GM12878 (cell line): ENCODE measurements at regions of chr10 and their contacts with region 1.

Region 1: DNA sequence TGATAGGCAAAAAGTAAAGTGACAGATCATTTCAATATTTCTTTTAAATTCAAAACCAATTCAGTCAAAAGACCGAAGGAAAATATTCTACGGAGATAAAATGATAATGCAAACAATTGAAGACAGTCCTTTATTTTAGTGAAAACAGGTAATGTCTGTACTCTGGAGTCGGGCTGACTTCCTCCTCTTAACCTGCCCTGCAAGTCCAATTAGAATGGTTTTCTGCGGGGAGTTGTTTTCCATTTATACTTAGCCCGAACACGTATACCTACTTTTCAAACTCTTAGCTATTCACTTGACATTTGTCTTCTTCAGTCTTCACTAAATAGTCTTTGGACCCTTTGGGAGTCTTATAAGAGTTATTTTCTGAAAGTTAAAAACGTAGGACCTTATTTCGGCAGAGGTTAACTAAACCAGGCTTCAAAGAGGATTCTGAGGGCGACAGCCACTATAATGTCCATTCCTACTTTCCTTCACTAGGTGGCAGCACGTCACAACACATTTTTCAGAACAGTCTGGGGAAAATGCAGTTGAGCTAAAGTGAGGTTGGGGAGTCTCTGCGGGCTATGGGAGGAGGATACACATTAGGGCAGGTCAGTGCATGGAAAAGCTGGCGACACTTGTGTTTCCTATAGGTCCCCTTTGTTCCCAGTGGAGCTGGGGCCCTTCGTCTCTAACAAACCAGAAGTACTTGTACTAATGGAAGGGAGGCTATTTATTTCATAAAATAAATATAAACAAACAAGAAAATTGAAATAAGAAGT is 472.0 kb downstream of the KCNMA1 start:
- DNase-seq: peak; percentile 24
- ATAC-seq: peak; percentile 95; the same call in 2 of the 3 replicates
- H3K4me3 ChIP-seq: no peak overlapping the region
- H3K27ac ChIP-seq: no peak overlapping the region
- H3K4me1 ChIP-seq: no peaks in the 10 kb centered on the region
- H3K27me3 ChIP-seq: no peaks in the 10 kb centered on the region
- CTCF ChIP-seq: peak; percentile 80 to 87 (median 81); a peak in 5 of 6 replicates
- EP300 ChIP-seq: no peak
- POLR2A ChIP-seq: no peak
- RAD21 ChIP-seq: peak; percentile 82

Region 2: DNA sequence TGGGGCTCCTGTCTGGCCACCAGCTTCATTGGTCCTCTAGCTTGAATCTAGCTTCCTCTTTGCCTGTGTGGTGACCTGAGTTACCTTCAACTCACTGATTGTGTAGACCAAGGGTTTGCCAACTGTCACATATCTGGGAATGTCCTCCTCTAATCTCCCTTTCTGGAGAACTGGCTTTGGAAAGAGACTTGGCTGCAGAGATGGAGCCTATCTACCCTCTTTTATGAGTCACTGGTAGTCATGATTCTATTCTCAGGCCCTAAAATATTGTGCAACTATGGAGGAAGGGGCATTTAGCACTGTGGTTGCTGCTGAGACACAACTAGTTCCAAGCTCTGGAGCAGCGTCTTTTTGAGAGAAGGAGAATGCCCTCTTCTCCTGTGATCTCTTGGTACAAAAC is 219.4 kb before region 1 on chr10:
- CTCF ChIA-PET with region 1: no interaction called
- POLR2A ChIA-PET with region 1: no interaction called
- RAD21 ChIA-PET with region 1: no interaction called
- SMC1A ChIA-PET with region 1: no interaction called
- in situ Hi-C with region 1: no loop called
- intact Hi-C with region 1: no loop called
- DNase-seq: no peak
- ATAC-seq: no peak
- H3K4me3 ChIP-seq: no peak overlapping the region
- H3K27ac ChIP-seq: no peak overlapping the region
- H3K4me1 ChIP-seq: no peaks in the 10 kb centered on the region
- H3K27me3 ChIP-seq: no peaks in the 10 kb centered on the region
- CTCF ChIP-seq: no peak
- EP300 ChIP-seq: no peak
- POLR2A ChIP-seq: no peak
- RAD21 ChIP-seq: no peak

Region 3: DNA sequence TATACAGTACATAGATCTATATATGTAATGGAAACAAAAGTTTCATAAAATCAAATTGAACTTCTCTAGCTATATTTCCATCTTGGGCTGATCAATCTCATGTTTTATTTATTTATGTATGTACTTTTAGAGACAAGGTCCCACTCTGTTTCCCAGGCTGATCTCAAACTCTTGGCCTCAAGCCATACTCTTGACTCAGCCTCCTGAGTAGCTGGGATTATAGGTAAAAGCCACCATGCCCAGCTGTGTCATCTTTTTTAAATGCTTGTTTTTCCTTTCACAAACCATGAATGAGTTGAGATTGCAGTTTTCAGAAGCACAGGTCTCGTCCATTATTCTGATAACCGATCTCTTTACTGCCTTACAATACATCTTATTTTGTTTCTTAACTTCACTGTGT is 71.1 kb after region 1 on chr10:
- CTCF ChIA-PET with region 1: interaction called, 24 read pairs
- POLR2A ChIA-PET with region 1: no interaction called
- RAD21 ChIA-PET with region 1: interaction called, 6 read pairs
- SMC1A ChIA-PET with region 1: interaction called, 23 read pairs
- in situ Hi-C with region 1: no loop called
- intact Hi-C with region 1: no loop called
- DNase-seq: no peak
- ATAC-seq: no peak
- H3K4me3 ChIP-seq: no peak overlapping the region
- H3K27ac ChIP-seq: no peak overlapping the region
- H3K4me1 ChIP-seq: no peaks in the 10 kb centered on the region
- H3K27me3 ChIP-seq: no peaks in the 10 kb centered on the region
- CTCF ChIP-seq: no peak
- EP300 ChIP-seq: no peak
- POLR2A ChIP-seq: no peak
- RAD21 ChIP-seq: no peak

Region 4: DNA sequence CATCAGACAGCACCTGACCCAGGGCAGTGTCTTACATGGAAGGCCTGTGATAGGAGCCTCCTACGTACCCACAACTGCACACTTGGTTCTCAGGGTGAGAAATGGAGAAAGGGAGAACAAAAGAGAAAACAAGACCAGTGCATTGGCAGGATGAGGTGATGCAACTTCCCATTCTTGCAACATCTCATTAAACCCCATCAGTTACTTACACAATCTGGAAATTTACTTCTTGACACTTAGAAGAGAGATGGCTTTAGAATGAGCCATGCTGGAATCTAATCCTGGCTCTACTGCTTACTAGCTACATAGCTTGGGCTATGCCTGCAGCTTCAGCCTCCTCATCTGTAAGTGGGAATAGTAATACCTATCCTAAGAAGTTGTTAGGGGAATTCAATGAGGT is 80.3 kb after region 1 on chr10:
- CTCF ChIA-PET with region 1: interaction called, 24 read pairs
- POLR2A ChIA-PET with region 1: interaction called, 4 read pairs
- RAD21 ChIA-PET with region 1: interaction called, 19 read pairs
- SMC1A ChIA-PET with region 1: interaction called, 106 read pairs
- in situ Hi-C with region 1: no loop called
- intact Hi-C with region 1: no loop called
- DNase-seq: no peak
- ATAC-seq: no peak
- H3K4me3 ChIP-seq: no peak overlapping the region
- H3K27ac ChIP-seq: no peak overlapping the region
- H3K4me1 ChIP-seq: no peaks in the 10 kb centered on the region
- H3K27me3 ChIP-seq: no peaks in the 10 kb centered on the region
- CTCF ChIP-seq: no peak
- EP300 ChIP-seq: no peak
- POLR2A ChIP-seq: no peak
- RAD21 ChIP-seq: no peak

Region 5: GRCh38 chr10:77251297-77252013 is 85.8 kb after region 1 on chr10:
- CTCF ChIA-PET with region 1: interaction called, 14 read pairs
- POLR2A ChIA-PET with region 1: no interaction called
- RAD21 ChIA-PET with region 1: interaction called, 19 read pairs
- SMC1A ChIA-PET with region 1: interaction called, 106 read pairs
- in situ Hi-C with region 1: no loop called
- intact Hi-C with region 1: no loop called
- DNase-seq: no peak
- ATAC-seq: peak; percentile 94
- H3K4me3 ChIP-seq: no peak overlapping the region
- H3K27ac ChIP-seq: no peak overlapping the region
- H3K4me1 ChIP-seq: no peaks in the 10 kb centered on the region
- H3K27me3 ChIP-seq: no peaks in the 10 kb centered on the region
- CTCF ChIP-seq: peak; percentile 59 to 76 (median 64)
- EP300 ChIP-seq: no peak
- POLR2A ChIP-seq: no peak
- RAD21 ChIP-seq: peak; percentile 66

Region 6: GRCh38 chr10:77436257-77436975 is 270.8 kb after region 1 on chr10:
- CTCF ChIA-PET with region 1: no interaction called
- POLR2A ChIA-PET with region 1: no interaction called
- RAD21 ChIA-PET with region 1: no interaction called
- SMC1A ChIA-PET with region 1: no interaction called
- in situ Hi-C with region 1: no loop called
- intact Hi-C with region 1: no loop called
- DNase-seq: no peak
- ATAC-seq: no peak
- H3K4me3 ChIP-seq: no peak overlapping the region
- H3K27ac ChIP-seq: no peak overlapping the region
- H3K4me1 ChIP-seq: no peaks in the 10 kb centered on the region
- H3K27me3 ChIP-seq: no peaks in the 10 kb centered on the region
- CTCF ChIP-seq: no peak
- EP300 ChIP-seq: no peak
- POLR2A ChIP-seq: no peak
- RAD21 ChIP-seq: no peak

Region 7: DNA sequence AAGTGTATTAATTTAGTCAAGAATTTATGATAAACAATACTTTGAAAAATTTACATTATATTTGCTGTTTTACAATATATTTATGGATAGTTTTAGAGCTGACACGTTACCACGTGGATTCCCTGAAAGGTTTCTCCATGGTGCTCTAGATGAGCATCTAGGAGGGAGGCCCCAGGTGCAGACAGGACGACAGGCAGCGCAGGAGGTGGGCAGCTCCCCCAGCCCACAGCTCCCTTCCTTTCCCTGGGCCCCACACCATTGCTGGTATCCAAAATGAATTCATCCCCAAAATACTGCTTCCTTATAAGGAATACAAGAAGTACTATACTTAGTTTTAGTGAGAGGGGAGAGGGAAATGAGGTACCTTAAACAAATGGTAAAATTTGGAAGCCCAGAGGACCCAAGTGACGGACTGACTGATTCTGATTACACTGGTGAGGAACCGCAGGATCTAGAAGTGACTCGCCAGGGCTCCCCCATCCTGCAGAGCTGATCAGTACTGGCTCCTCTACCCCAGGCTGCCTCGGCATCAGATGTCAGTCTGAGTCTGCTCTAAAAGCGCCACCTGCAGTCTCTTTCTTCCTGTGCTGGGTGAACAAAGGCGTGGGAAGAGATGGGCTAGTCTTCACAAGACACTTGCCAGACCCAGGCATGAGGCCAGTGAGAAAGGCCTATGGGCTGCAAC is 671.8 kb after region 1 on chr10:
- CTCF ChIA-PET with region 1: interaction called, 5 read pairs
- POLR2A ChIA-PET with region 1: no interaction called
- RAD21 ChIA-PET with region 1: no interaction called
- SMC1A ChIA-PET with region 1: interaction called, 4 read pairs
- in situ Hi-C with region 1: no loop called
- intact Hi-C with region 1: loop called (anchors 5 kb)
- DNase-seq: peak; percentile 68
- ATAC-seq: peak; percentile 96
- H3K4me3 ChIP-seq: no peak overlapping the region
- H3K27ac ChIP-seq: peak overlapping the region; percentile 57
- H3K4me1 ChIP-seq: peaks cover 11% of the 10 kb centered on the region
- H3K27me3 ChIP-seq: no peaks in the 10 kb centered on the region
- CTCF ChIP-seq: peak; percentile 59 to 94 (median 66); a peak in 5 of 6 replicates
- EP300 ChIP-seq: peak in 1 of 2 experiments; percentile 73; a peak in 3 of 4 replicates
- POLR2A ChIP-seq: no peak
- RAD21 ChIP-seq: peak; percentile 84